Esophagus muscularis mucosa (tissue), 4 donors: ENCODE measurements at regions of chr1 and their contacts with region 1.

Region 1: DNA sequence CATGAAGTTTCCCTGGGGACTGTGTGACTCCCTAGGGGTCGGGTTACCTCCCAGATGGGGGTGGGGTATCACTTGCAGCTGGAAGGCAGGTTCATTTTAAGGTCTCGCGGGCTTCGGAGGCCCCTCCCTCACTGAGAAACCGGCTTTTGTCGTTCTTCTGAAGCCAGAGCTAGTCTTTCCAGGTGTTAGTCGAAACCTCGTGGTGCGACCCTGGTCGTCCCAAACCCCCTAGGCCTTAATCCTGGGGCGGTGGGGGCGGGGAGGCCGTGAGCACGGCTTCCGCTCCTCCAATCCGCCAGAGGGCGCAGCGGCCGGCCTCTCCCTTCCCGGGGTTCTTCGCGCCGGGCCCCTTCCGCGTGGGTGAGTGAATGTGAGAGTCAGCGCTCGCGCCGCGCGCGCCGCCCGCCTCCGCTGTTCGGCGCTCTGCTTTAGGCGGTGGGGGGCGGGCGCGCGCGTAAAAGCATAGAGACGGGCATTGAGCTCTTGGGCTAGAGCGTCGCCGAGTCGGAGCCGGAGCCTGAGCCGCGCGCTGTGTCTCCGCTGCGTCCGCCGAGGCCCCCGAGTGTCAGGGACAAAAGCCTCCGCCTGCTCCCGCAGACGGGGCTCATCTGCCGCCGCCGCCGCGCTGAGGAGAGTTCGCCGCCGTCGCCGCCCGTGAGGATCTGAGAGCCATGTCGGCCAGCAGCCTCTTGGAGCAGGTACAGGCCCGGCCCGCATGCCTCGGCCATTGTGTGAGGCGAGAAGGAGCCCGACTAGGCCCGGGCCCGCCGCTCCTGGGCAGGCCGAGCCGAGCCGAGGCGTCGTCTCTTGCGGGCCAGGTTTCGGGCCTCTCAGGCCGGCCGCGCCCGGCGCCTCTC is at the start of gene YTHDF2:
- DNase-seq: peak; percentile 98
- H3K4me3 ChIP-seq: peak within 1 kb of the TSS; percentile 78 to 100 (median 86)
- H3K27ac ChIP-seq: peak within 1 kb of the TSS; percentile 91 to 95 (median 94)
- H3K4me1 ChIP-seq: peaks cover 40 to 56% (median 50%) of the 10 kb centered on the region in 4 donors
- H3K27me3 ChIP-seq: no peaks in the 10 kb centered on the region
- CTCF ChIP-seq: peak; percentile 91 to 95 (median 92)
- EP300 ChIP-seq: no peak
- POLR2A ChIP-seq: peak; percentile 85
- total RNA-seq, gene YTHDF2: 39.3 to 53.3 (median 41.6) TPM

Region 2: GRCh38 chr1:28505406-28506187 is 231.1 kb before region 1 on chr1 and contains the start of gene RCC1:
- intact Hi-C with region 1: loop called (anchors 5 kb)
- DNase-seq: peak; percentile 99
- H3K4me3 ChIP-seq: peak within 1 kb of the TSS; percentile 64 to 73 (median 68)
- H3K27ac ChIP-seq: peak within 1 kb of the TSS; percentile 84 to 91 (median 88)
- H3K4me1 ChIP-seq: peaks cover 32 to 49% (median 41%) of the 10 kb centered on the region in 4 donors
- H3K27me3 ChIP-seq: no peaks in the 10 kb centered on the region
- CTCF ChIP-seq: peak in 1 of 3 experiments; percentile 22
- EP300 ChIP-seq: no peak
- POLR2A ChIP-seq: peak; percentile 96
- total RNA-seq, gene RCC1: 8.3 to 17.1 (median 11.3) TPM

Region 3: DNA sequence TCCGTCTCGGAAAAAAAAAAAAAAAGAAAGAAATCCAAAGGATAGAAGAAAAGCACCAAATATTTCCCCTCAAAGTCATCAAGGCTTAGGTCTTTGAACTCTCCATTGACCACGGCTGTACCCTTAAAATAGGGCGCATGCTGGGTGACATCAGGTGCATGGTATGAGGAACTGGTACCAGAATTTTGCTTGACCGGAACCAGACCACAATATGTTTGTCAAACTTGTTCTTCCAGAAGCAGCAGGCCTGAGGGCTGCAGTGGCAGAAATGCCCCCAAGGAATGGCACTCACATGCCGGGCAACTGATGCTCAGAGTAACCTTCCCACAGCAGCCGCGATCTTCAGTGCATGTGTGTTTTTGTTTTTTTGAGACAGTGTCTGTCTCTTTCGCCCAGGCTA is 209.8 kb before region 1 on chr1:
- intact Hi-C with region 1: no loop called
- DNase-seq: no peak
- H3K4me3 ChIP-seq: no peak overlapping the region
- H3K27ac ChIP-seq: no peak overlapping the region
- H3K4me1 ChIP-seq: no peaks in the 10 kb centered on the region
- H3K27me3 ChIP-seq: no peaks in the 10 kb centered on the region
- CTCF ChIP-seq: no peak
- EP300 ChIP-seq: no peak
- POLR2A ChIP-seq: no peak

Region 4: DNA sequence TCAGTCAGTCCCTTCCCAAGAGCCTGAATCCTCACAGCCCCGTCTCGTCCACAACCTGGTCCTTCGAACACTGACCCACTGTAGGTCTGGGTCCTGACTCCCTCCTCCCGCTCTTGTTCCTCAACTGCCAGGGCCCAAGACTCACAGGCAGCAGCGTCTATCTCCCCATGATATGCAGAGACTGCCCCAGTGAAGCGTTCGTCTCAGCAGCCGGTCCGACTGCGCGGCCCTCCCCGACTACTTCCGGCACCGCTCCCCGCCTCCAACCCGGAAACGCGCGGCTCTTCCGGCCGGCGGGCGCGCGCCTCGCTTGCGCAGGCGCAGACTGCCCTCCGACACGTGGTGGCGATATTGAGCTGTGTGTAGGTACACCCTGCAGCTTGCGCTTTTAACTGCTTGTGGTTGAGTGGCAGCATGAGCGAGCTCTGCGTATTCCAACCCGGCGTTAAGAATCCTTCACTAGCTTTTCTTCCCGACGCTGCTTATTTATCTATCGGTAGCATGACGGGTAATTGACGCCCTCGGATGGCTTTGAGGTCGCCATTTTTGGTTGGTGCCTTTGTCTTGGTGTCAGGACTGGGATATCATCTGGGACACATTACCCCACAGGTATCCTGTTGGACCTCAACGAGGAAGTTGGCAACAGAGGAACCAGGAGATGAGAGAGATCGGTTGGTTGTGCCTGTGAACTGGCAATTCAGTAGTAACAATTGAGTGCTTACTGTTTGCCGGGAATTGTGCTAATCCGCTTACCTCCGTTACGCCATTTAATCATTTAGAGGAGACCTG is 93.6 kb before region 1 on chr1 and contains the start of gene TAF12:
- intact Hi-C with region 1: loop called (anchors 2 kb)
- DNase-seq: peak; percentile 96
- H3K4me3 ChIP-seq: peak within 1 kb of the TSS; percentile 77 to 89 (median 82)
- H3K27ac ChIP-seq: peak within 1 kb of the TSS; percentile 83 to 94 (median 88)
- H3K4me1 ChIP-seq: peaks cover 30 to 60% (median 43%) of the 10 kb centered on the region in 4 donors
- H3K27me3 ChIP-seq: no peaks in the 10 kb centered on the region
- CTCF ChIP-seq: peak; percentile 35 to 51 (median 36)
- EP300 ChIP-seq: no peak
- POLR2A ChIP-seq: peak; percentile 87
- total RNA-seq, gene TAF12: 16.1 to 17.6 (median 17.1) TPM

Region 5: GRCh38 chr1:28668191-28668955 is 68.3 kb before region 1 on chr1 and contains the start of gene GMEB1:
- intact Hi-C with region 1: loop called (anchors 2 kb)
- DNase-seq: peak; percentile 93
- H3K4me3 ChIP-seq: peak within 1 kb of the TSS; percentile 86 to 99 (median 98)
- H3K27ac ChIP-seq: peak within 1 kb of the TSS; percentile 98 to 100 (median 99)
- H3K4me1 ChIP-seq: peaks cover 17 to 25% (median 24%) of the 10 kb centered on the region in 4 donors
- H3K27me3 ChIP-seq: no peaks in the 10 kb centered on the region
- CTCF ChIP-seq: no peak
- EP300 ChIP-seq: no peak
- POLR2A ChIP-seq: no peak
- total RNA-seq, gene GMEB1: 7.1 to 11.0 (median 9.8) TPM

Region 6: DNA sequence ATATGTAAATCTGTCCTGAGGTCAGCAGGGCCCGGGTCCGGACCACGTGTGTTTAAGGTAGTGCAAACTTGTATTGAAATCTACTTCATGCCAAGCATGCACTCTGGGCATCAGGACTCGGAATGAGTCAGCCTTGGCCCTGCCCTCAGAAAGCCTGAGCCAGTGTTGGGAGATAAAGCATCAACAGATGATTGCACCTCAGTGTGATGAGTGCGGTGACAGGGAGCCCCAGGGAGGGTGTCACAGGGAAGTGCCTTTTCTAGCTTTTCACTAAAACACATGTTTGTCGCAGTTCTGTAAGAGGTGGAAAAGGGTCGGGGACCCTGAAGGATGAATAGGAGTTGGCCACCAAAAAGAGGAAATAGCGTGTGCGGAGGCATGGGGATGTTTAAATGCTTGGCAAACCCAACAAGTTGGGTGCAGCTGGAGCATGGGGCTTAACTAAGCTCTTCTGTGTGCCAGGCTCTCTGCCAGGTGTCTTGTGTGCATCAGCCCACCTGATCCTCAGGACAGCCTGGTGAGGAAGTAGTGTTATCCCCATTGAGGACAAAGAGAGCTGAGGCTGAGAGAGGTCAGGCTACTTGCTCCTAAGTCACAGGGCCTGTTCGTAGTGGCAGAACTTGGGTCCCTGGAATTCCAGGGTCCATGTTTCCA is 129.4 kb after region 1 on chr1:
- intact Hi-C with region 1: no loop called
- DNase-seq: no peak
- H3K4me3 ChIP-seq: no peak overlapping the region
- H3K27ac ChIP-seq: no peak overlapping the region
- H3K4me1 ChIP-seq: no peaks in the 10 kb centered on the region
- H3K27me3 ChIP-seq: peaks cover 0 to 31% (median 0%) of the 10 kb centered on the region in 4 donors
- CTCF ChIP-seq: no peak
- EP300 ChIP-seq: no peak
- POLR2A ChIP-seq: no peak

Region 7: GRCh38 chr1:28886731-28887418 is 150.2 kb after region 1 on chr1:
- intact Hi-C with region 1: no loop called
- DNase-seq: peak; percentile 95
- H3K4me3 ChIP-seq: peak overlapping the region; percentile 78 to 95 (median 87)
- H3K27ac ChIP-seq: peak overlapping the region; percentile 76 to 77 (median 77)
- H3K4me1 ChIP-seq: peaks cover 19 to 63% (median 46%) of the 10 kb centered on the region in 4 donors
- H3K27me3 ChIP-seq: no peaks in the 10 kb centered on the region
- CTCF ChIP-seq: no peak
- EP300 ChIP-seq: no peak
- POLR2A ChIP-seq: no peak

Region 8: GRCh38 chr1:29043274-29043965 is 306.7 kb after region 1 on chr1:
- intact Hi-C with region 1: no loop called
- DNase-seq: no peak
- H3K4me3 ChIP-seq: no peak overlapping the region
- H3K27ac ChIP-seq: peak overlapping the region in 2 of 4 donors; percentile 4 to 26
- H3K4me1 ChIP-seq: peaks cover 0 to 14% (median 11%) of the 10 kb centered on the region in 4 donors
- H3K27me3 ChIP-seq: no peaks in the 10 kb centered on the region
- CTCF ChIP-seq: no peak
- EP300 ChIP-seq: no peak
- POLR2A ChIP-seq: no peak